Activated CD4-positive, alpha-beta memory T cell treated with anti-CD3 and anti-CD28 coated beads for 36 hours (primary cell): ENCODE measurements at regions of chr11 and their contacts with region 1.

Region 1: GRCh38 chr11:20647976-20648565 is 21.3 kb upstream of the NELL1 start:
- DNase-seq: peak; percentile 32
- H3K4me3 Mint-ChIP-seq: no peak overlapping the region
- H3K27ac Mint-ChIP-seq: no peak overlapping the region
- H3K4me1 Mint-ChIP-seq: no peaks in the 10 kb centered on the region
- H3K27me3 Mint-ChIP-seq: peaks cover 4% of the 10 kb centered on the region

Region 2: GRCh38 chr11:20584093-20584774 is 63.8 kb before region 1 on chr11:
- CTCF ChIA-PET with region 1: no interaction called
- POLR2A ChIA-PET with region 1: no interaction called
- intact Hi-C with region 1: no loop called
- DNase-seq: no peak
- H3K4me3 Mint-ChIP-seq: no peak overlapping the region
- H3K27ac Mint-ChIP-seq: no peak overlapping the region
- H3K4me1 Mint-ChIP-seq: no peaks in the 10 kb centered on the region
- H3K27me3 Mint-ChIP-seq: peaks cover 10% of the 10 kb centered on the region

Region 3: GRCh38 chr11:20715464-20715863 is 67.4 kb after region 1 on chr11:
- CTCF ChIA-PET with region 1: no interaction called
- POLR2A ChIA-PET with region 1: no interaction called
- intact Hi-C with region 1: no loop called
- DNase-seq: no peak
- H3K4me3 Mint-ChIP-seq: no peak overlapping the region
- H3K27ac Mint-ChIP-seq: no peak overlapping the region
- H3K4me1 Mint-ChIP-seq: no peaks in the 10 kb centered on the region
- H3K27me3 Mint-ChIP-seq: no peaks in the 10 kb centered on the region

Region 4: GRCh38 chr11:21511835-21512440 is 863.9 kb after region 1 on chr11:
- CTCF ChIA-PET with region 1: interaction called, 3 read pairs
- POLR2A ChIA-PET with region 1: no interaction called
- intact Hi-C with region 1: loop called (anchors 5 kb)
- DNase-seq: peak; percentile 30
- H3K4me3 Mint-ChIP-seq: no peak overlapping the region
- H3K27ac Mint-ChIP-seq: no peak overlapping the region
- H3K4me1 Mint-ChIP-seq: no peaks in the 10 kb centered on the region
- H3K27me3 Mint-ChIP-seq: no peaks in the 10 kb centered on the region

Region 5: DNA sequence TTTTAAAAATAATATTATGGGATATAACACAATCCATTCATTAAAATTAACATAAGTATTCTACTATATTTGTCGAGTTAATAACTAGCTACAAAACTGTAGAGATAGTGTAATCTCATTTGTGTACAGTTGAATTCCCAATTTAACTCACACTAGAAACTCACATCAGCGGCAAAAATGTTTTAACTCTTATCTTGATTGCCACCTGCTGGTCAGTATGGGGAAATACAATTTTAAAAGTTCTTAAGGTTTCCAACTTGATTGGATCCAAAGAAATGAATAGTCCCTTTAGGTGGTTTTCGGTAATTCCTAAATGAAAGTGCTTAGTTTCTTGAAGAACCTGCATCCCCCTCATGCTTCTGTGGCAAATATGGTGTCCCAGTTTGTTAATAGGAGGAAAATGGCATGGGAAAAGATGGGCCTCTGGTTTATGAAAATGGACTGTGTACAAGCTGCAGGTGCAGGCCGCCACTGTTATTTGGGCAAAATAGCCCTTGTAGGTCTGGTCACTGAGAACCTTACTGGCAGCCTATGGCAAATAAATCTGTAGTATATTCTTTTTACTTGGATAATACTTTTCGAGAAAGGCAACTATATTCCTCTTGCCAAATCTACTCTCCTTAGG is 1656.4 kb after region 1 on chr11:
- CTCF ChIA-PET with region 1: interaction called, 13 read pairs
- POLR2A ChIA-PET with region 1: no interaction called
- intact Hi-C with region 1: no loop called
- DNase-seq: no peak
- H3K4me3 Mint-ChIP-seq: no peak overlapping the region
- H3K27ac Mint-ChIP-seq: no peak overlapping the region
- H3K4me1 Mint-ChIP-seq: no peaks in the 10 kb centered on the region
- H3K27me3 Mint-ChIP-seq: peaks cover 3% of the 10 kb centered on the region